Endothelial cell of umbilical vein (primary cell): ENCODE measurements at regions of chr13 and their contacts with region 1.

Region 1: DNA sequence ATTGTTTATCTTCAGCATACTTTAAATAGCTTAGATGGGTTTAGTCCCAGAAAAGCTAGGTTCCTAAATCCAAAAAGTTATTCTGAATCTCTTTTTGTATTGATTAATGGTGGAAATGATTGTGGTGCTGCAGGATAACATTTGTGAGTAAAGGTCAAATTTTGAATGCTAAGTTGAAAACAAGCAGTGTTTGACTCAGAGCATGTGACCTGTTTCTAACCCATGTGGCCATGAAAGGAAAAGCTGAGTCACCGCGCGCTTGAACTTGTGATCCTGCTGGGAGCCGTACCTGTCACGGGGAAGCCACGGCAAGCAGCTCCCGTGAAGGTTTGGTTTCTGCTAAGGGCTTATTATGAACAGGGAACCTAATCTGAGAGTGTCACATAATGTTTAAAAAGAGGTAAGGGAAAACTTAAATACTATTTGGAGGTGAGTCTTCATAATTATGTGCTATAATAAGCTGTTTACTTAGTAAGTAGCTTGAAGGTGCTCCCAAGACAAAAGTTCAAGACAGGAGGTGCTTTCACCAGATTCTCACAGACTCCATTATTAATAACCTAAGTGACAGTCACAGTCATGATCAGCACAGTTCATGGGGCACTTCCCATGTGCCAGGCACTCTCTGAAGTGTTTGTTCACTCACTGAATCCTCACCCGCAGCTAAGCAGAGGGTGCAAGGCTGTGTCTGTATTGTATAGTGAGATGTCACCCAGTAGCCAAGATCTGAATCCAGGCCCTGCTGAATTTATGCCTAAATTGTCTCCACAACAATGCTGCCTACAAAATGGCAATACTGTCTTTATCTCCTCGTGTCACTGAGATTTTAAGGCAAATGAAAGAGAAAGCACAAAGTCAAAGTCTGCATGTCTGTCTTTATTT is 286.5 kb downstream of the MYO16 start:
- DNase-seq: peak; percentile 97
- H3K4me3 ChIP-seq: peak overlapping the region in 1 of 3 experiments; percentile 31
- H3K27ac ChIP-seq: peak overlapping the region; percentile 80
- H3K4me1 ChIP-seq: peaks cover 25% of the 10 kb centered on the region
- H3K27me3 ChIP-seq: no peaks in the 10 kb centered on the region
- CTCF ChIP-seq: no peak
- POLR2A ChIP-seq: no peak

Region 2: GRCh38 chr13:108816381-108816780 is 99.5 kb before region 1 on chr13:
- CTCF ChIA-PET with region 1: no interaction called
- POLR2A ChIA-PET with region 1: no interaction called
- dilution Hi-C with region 1: no loop called
- intact Hi-C with region 1: no loop called
- DNase-seq: no peak
- H3K4me3 ChIP-seq: no peak overlapping the region
- H3K27ac ChIP-seq: no peak overlapping the region
- H3K4me1 ChIP-seq: no peaks in the 10 kb centered on the region
- H3K27me3 ChIP-seq: no peaks in the 10 kb centered on the region
- CTCF ChIP-seq: no peak
- POLR2A ChIP-seq: no peak

Region 3: GRCh38 chr13:108902557-108903155 is 13.2 kb before region 1 on chr13:
- CTCF ChIA-PET with region 1: interaction called, 21 read pairs
- POLR2A ChIA-PET with region 1: interaction called, 3 read pairs
- dilution Hi-C with region 1: no loop called
- intact Hi-C with region 1: no loop called
- DNase-seq: peak; percentile 82
- H3K4me3 ChIP-seq: no peak overlapping the region
- H3K27ac ChIP-seq: no peak overlapping the region
- H3K4me1 ChIP-seq: peaks cover 6% of the 10 kb centered on the region
- H3K27me3 ChIP-seq: peaks cover 0 to 1% of the 10 kb centered on the region in 2 experiments
- CTCF ChIP-seq: no peak
- POLR2A ChIP-seq: no peak

Region 4: GRCh38 chr13:108955741-108956140 is 39.9 kb after region 1 on chr13:
- CTCF ChIA-PET with region 1: interaction called, 46 read pairs
- POLR2A ChIA-PET with region 1: no interaction called
- dilution Hi-C with region 1: no loop called
- intact Hi-C with region 1: loop called (anchors 1 kb)
- DNase-seq: no peak
- H3K4me3 ChIP-seq: no peak overlapping the region
- H3K27ac ChIP-seq: no peak overlapping the region
- H3K4me1 ChIP-seq: peaks cover 8% of the 10 kb centered on the region
- H3K27me3 ChIP-seq: no peaks in the 10 kb centered on the region
- CTCF ChIP-seq: no peak
- POLR2A ChIP-seq: no peak

Region 5: DNA sequence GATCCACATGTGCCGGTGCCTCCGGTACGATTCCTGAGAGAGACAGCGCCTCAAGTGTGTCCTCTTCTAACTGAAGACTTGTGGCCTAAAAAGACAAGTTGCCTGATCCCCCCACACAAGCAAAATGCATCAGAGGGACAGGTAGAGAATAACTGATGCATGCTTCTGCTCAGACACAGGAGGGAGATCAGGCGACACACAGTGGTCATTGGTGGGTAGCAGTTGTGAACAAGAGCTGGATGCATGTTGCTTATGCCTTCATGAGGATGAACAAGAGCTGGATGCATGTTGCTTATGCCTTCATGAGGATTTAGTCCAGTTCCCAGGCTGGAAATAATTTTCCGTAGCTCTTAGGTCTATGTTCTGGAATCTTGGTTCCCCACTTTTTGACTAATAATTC is 219.1 kb after region 1 on chr13:
- CTCF ChIA-PET with region 1: interaction called, 10 read pairs
- POLR2A ChIA-PET with region 1: no interaction called
- dilution Hi-C with region 1: no loop called
- intact Hi-C with region 1: no loop called
- DNase-seq: no peak
- H3K4me3 ChIP-seq: no peak overlapping the region
- H3K27ac ChIP-seq: no peak overlapping the region
- H3K4me1 ChIP-seq: no peaks in the 10 kb centered on the region
- H3K27me3 ChIP-seq: peaks cover 2 to 8% of the 10 kb centered on the region in 2 experiments
- CTCF ChIP-seq: peak in 1 of 2 donors; percentile 25
- POLR2A ChIP-seq: no peak

Region 6: GRCh38 chr13:109344552-109345157 is 428.8 kb after region 1 on chr13:
- CTCF ChIA-PET with region 1: no interaction called
- POLR2A ChIA-PET with region 1: no interaction called
- dilution Hi-C with region 1: no loop called
- intact Hi-C with region 1: loop called (anchors 5 kb)
- DNase-seq: peak; percentile 67
- H3K4me3 ChIP-seq: no peak overlapping the region
- H3K27ac ChIP-seq: peak overlapping the region; percentile 90
- H3K4me1 ChIP-seq: peaks cover 40% of the 10 kb centered on the region
- H3K27me3 ChIP-seq: no peaks in the 10 kb centered on the region
- CTCF ChIP-seq: no peak
- POLR2A ChIP-seq: no peak

Region 7: DNA sequence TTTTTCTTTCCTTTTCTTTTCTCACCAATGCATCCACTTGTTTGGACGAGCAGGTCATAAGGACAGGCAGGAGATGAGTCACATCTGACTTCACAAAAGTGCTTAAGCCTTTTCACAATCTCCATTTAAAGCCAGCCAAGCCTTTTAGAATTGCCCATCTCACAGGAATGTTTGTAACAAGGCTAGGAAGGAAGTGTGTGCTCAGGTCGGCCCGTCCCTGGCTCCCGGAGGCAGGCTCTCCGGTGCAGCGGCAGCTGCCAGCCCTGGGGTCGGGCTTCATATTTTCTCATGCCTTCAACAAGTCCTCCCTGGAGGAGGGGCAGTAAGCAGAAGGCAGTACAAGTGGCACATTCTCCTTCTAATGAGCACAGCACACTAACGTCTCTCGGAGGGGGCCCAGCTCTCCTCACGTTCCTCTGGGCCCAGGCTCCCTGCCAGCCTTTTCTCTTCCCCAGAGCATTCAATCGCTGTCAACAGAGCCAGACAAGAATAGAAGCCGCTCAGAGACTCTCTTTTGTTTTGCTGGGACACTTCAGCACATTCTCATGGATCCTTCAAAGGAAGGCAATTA is 1210.6 kb after region 1 on chr13:
- CTCF ChIA-PET with region 1: interaction called, 4 read pairs
- POLR2A ChIA-PET with region 1: no interaction called
- dilution Hi-C with region 1: no loop called
- intact Hi-C with region 1: loop called (anchors 5 kb)
- DNase-seq: peak; percentile 98
- H3K4me3 ChIP-seq: peak overlapping the region in 1 of 3 experiments; percentile 9
- H3K27ac ChIP-seq: peak overlapping the region; percentile 92
- H3K4me1 ChIP-seq: peaks cover 50% of the 10 kb centered on the region
- H3K27me3 ChIP-seq: no peaks in the 10 kb centered on the region
- CTCF ChIP-seq: no peak
- POLR2A ChIP-seq: peak; percentile 43